ENCODE measurements at regions of chr5 and their contacts with region 1.

Region 1: DNA sequence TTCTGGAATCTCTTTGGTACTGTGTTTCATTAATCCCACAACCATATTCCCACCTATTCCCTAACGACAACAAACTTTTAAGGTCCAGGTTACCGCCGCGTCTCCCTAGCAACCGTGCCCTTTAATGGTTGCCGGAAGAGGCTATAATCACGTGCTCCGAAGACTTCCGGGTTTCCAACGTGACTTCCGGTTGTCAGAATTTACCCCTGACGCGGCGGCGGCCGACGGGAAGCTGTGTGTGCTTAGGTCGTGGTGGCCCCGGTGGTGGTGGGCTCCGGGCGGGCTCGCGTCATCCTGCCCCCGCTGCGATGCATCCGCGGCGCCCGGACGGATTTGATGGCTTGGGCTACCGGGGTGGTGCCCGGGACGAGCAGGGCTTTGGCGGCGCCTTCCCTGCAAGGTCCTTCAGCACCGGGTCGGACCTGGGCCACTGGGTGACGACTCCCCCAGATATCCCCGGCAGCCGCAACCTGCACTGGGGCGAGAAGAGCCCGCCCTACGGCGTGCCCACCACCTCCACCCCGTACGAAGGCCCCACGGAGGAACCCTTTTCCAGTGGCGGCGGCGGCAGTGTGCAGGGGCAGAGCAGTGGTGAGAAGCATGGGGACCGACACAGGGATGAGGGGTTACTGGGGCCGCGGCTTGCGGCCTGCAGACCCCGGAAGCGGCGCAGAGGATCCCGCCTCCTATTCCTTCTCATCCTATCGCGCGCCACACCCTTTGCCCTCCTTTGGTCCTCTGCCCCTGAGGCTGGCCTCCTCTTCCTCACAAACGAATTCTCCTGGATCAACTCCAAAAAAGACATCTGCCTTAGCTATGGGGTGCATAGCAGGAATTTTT is at the start of gene SLC25A46:
- DNase-seq: peak; percentile 75 to 92 (median 91)
- ATAC-seq: peak; percentile 92
- H3K4me3 ChIP-seq: peak within 1 kb of the TSS; percentile 96
- H3K4me3 Mint-ChIP-seq: peak within 1 kb of the TSS; percentile 90 to 100 (median 96)
- H3K27ac ChIP-seq: peak within 1 kb of the TSS; percentile 86
- H3K27ac Mint-ChIP-seq: peak within 1 kb of the TSS; percentile 91 to 100 (median 96)
- H3K4me1 ChIP-seq: peaks cover 4 to 15% of the 10 kb centered on the region in 2 donors
- H3K4me1 Mint-ChIP-seq: peaks cover 14 to 45% (median 34%) of the 10 kb centered on the region in 7 donors
- H3K27me3 ChIP-seq: no peaks in the 10 kb centered on the region
- H3K27me3 Mint-ChIP-seq: peaks cover 4 to 19% (median 6%) of the 10 kb centered on the region in 5 donors
- total RNA-seq, gene SLC25A46: 23.8 to 50.5 (median 35.9) TPM

Region 2: DNA sequence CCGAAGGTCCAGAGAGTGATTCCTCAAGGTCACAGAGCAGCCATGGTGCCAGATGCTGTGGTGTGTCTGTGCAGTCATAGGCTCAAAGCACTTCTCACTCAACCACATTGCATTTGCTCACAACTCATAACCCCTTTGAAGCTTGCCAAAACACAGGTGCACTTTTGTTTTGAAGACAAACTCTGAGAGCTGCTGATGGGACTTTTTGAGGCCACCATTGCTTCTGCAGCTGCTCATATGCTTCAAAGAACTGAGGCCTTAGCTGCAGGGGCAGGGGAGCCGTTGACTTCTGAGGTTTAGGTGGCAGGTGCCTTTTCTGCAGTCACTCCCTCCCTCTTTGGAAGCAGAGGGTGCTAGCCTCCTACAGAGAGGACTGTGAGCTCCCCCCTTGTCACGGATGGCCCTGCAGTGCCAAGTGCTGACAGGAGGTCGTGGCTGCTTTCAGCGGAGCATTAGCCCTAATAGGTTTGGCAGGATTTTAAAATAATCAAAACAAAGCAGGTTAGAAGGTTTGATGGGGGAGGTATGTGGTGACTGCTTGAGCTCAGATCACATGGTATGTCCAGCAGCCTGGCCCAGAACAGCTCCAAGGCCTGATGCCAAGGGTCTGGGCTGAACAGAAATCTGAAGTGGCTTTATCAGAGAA is 817.2 kb before region 1 on chr5:
- CTCF ChIA-PET with region 1: no interaction called
- POLR2A ChIA-PET with region 1: no interaction called
- intact Hi-C with region 1: loop called in 1 of 2 experiments (anchors 5 kb)
- DNase-seq: peak; percentile 13 to 90 (median 84)
- ATAC-seq: peak; percentile 92
- H3K4me3 ChIP-seq: peak overlapping the region; percentile 1
- H3K4me3 Mint-ChIP-seq: peak overlapping the region; percentile 75 to 91 (median 82)
- H3K27ac ChIP-seq: peak overlapping the region; percentile 78
- H3K27ac Mint-ChIP-seq: peak overlapping the region; percentile 89 to 100 (median 97)
- H3K4me1 ChIP-seq: peaks cover 34 to 45% of the 10 kb centered on the region in 2 donors
- H3K4me1 Mint-ChIP-seq: peaks cover 17 to 76% (median 62%) of the 10 kb centered on the region in 7 donors
- H3K27me3 ChIP-seq: no peaks in the 10 kb centered on the region
- H3K27me3 Mint-ChIP-seq: no peaks in the 10 kb centered on the region

Region 3: DNA sequence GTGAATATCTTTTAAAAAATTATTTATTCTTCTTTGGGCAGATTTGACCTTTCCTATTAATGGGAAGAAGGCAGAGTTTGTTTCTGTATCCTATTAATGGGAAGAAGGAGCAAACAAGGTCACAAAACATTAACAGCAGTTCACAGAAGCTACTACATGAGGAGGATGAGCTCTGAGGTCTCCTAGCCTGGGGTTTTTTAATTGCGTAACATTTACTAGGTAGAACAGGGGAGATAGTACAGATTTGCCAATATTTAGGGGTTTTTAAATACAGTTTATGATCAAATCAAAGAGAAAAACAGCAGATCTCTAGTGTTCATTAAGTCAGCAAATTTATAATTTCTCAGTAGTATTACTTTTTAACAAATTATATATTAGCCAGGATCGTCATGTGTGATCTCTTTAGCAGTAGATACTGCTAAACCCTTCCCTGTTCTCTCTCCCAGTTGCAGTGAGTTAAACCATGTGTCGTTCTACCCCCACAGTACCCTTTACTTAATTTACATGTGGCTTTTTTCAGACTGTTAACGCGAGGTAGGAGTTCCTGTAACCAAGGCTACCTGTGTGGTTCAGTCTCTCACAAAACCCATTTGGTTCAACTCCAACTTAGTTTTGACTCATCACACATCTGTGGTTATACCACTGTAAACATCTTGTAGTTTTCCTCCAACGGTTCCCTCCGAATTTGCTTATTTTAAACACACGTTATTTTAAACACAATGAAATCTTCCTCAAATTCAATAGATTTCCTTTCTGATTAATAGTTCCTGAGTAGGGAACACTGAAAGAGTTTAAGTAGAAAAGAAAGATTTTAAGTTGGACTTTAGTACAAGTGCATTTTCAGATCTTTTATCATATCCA is 13.1 kb after region 1 on chr5:
- CTCF ChIA-PET with region 1: interaction called, 4 read pairs
- POLR2A ChIA-PET with region 1: interaction called, 3 read pairs
- intact Hi-C with region 1: loop called (anchors 1 kb)
- DNase-seq: peak in 2 of 9 donors; percentile 8 to 30
- ATAC-seq: peak; percentile 82
- H3K4me3 ChIP-seq: no peak overlapping the region
- H3K4me3 Mint-ChIP-seq: peak overlapping the region in 1 of 10 donors; percentile 68
- H3K27ac ChIP-seq: no peak overlapping the region
- H3K27ac Mint-ChIP-seq: peak overlapping the region in 8 of 9 donors; percentile 5 to 84 (median 59)
- H3K4me1 ChIP-seq: peaks cover 0 to 12% of the 10 kb centered on the region in 2 donors
- H3K4me1 Mint-ChIP-seq: peaks cover 15 to 47% (median 34%) of the 10 kb centered on the region in 7 donors
- H3K27me3 ChIP-seq: no peaks in the 10 kb centered on the region
- H3K27me3 Mint-ChIP-seq: no peaks in the 10 kb centered on the region

Region 4: GRCh38 chr5:111223889-111224563 is 485.0 kb after region 1 on chr5 and contains the start of gene CAMK4:
- CTCF ChIA-PET with region 1: no interaction called
- POLR2A ChIA-PET with region 1: no interaction called
- intact Hi-C with region 1: loop called in 1 of 2 experiments (anchors 5 kb)
- DNase-seq: peak; percentile 74 to 87 (median 84)
- ATAC-seq: peak; percentile 95
- H3K4me3 ChIP-seq: peak within 1 kb of the TSS; percentile 81
- H3K4me3 Mint-ChIP-seq: peak within 1 kb of the TSS; percentile 79 to 99 (median 96)
- H3K27ac ChIP-seq: peak within 1 kb of the TSS; percentile 93
- H3K27ac Mint-ChIP-seq: peak within 1 kb of the TSS; percentile 89 to 99 (median 97)
- H3K4me1 ChIP-seq: peaks cover 17 to 25% of the 10 kb centered on the region in 2 donors
- H3K4me1 Mint-ChIP-seq: peaks cover 15 to 39% (median 26%) of the 10 kb centered on the region in 7 donors
- H3K27me3 ChIP-seq: no peaks in the 10 kb centered on the region
- H3K27me3 Mint-ChIP-seq: peaks cover 0 to 4% (median 0%) of the 10 kb centered on the region in 5 donors
- total RNA-seq, gene CAMK4: 118 to 366 (median 210) TPM

Region 5: GRCh38 chr5:111530298-111530740 is 791.3 kb after region 1 on chr5:
- CTCF ChIA-PET with region 1: no interaction called
- POLR2A ChIA-PET with region 1: no interaction called
- intact Hi-C with region 1: loop called in 1 of 2 experiments (anchors 5 kb)
- DNase-seq: peak; percentile 51 to 94 (median 78)
- ATAC-seq: peak; percentile 100
- H3K4me3 ChIP-seq: peak overlapping the region; percentile 6
- H3K4me3 Mint-ChIP-seq: peak overlapping the region; percentile 1 to 78 (median 66)
- H3K27ac ChIP-seq: peak overlapping the region; percentile 34
- H3K27ac Mint-ChIP-seq: peak overlapping the region; percentile 6 to 90 (median 76)
- H3K4me1 ChIP-seq: peaks cover 9 to 13% of the 10 kb centered on the region in 2 donors
- H3K4me1 Mint-ChIP-seq: peaks cover 10 to 28% (median 14%) of the 10 kb centered on the region in 7 donors
- H3K27me3 ChIP-seq: no peaks in the 10 kb centered on the region
- H3K27me3 Mint-ChIP-seq: peaks cover 0 to 3% (median 0%) of the 10 kb centered on the region in 5 donors